Left colon (tissue), 2 donors: ENCODE measurements at regions of chr2 and their contacts with region 1.

Region 1: GRCh38 chr2:235106874-235107639 is 155.2 kb downstream of the SH3BP4 start:
- DNase-seq: peak; percentile 37 to 71
- ATAC-seq: peak; percentile 88

Region 2: DNA sequence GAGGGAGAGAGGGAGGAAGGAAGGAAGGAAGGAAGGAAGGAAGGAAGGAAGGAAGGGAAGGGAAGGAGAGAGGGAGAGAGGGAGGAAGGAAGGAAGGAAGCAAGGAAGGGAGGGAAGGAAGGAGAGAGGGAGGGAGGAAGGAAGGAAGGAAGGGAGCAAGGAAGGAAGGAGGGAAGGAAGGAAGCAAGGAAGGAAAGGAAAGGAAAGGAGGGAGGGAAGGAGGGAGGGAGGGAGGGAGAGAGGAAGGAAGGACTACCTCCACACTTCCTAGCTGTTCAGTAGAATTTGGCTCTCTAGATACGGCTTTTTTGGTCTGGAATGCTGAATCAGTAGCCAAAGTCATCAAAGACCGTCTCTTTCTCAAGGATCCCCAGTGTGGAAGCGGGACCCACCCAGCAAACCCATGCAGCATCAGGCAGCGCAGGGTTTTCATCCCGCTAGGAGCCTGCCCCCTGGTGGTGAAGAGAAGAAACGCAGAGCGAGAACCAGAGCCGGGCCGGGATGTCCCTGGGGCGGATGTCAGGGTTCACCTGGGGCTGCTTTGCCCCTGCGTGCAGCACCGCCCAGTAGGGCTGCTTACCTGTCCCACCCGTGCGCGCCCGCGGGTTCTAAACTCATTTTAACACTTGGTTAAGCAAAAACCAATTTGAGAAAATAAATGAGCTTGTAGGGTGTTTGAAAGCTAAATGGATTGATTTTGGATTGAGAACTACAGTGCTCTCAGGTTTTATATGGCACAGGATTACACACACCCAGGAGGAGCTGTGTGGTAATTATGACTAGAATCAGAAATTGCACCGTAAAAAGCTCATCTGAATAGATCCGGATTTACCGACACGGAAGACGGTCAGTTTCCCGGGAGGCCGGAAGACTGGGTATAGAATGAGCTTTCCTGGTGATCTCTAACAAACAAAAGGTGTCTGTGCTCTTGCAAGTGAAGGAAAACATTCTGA is 562.1 kb before region 1 on chr2:
- intact Hi-C with region 1: loop called in 1 of 2 experiments (anchors 10 kb)
- DNase-seq: peak; percentile 41 to 75
- ATAC-seq: peak; percentile 84

Region 3: DNA sequence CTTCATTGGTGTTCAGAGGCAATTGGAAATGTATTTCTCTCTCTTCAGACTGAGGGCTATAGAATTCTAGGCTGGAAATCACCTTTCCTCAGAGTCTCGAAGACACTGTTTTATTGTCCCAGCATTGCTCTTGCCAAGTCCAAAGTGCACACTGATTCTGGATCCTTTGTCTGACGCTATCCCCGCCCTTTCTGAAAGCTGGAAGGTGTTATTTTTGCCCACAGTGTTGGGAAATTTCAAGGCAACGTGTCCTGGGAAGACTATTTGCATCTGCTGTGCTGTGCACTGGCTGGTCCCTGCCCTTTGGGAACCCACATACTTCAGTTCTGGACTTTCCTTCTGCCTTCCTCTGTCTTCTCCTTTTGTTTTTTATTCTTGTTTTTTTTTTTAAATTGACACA is 35.5 kb after region 1 on chr2:
- intact Hi-C with region 1: no loop called
- DNase-seq: peak; percentile 39 to 80
- ATAC-seq: peak; percentile 94